H1 (cell line): ENCODE measurements at regions of chr12 and their contacts with region 1.

Region 1: GRCh38 chr12:9906873-9907272 is 25.3 kb downstream of the CLEC2A start:
- DNase-seq: no peak
- H3K4me3 ChIP-seq: peak overlapping the region in 1 of 4 experiments; percentile 71; a peak in 3 of 8 replicates
- H3K27ac ChIP-seq: no peak overlapping the region
- H3K4me1 ChIP-seq: peaks cover 0 to 9% (median 6%) of the 10 kb centered on the region in 4 experiments; a peak in 3 of 7 replicates
- H3K27me3 ChIP-seq: no peaks in the 10 kb centered on the region
- CTCF ChIP-seq: no peak
- EP300 ChIP-seq: no peak
- POLR2A ChIP-seq: peak in 1 of 2 experiments; percentile 37; a peak in 2 of 3 replicates
- RAD21 ChIP-seq: no peak

Region 2: GRCh38 chr12:9925708-9926393 is 19.0 kb after region 1 on chr12:
- CTCF ChIA-PET with region 1: interaction called, 4 read pairs
- POLR2A ChIA-PET with region 1: interaction called, 11 read pairs
- DNase-seq: peak in 1 of 2 experiments; percentile 33
- H3K4me3 ChIP-seq: no peak overlapping the region
- H3K27ac ChIP-seq: no peak overlapping the region
- H3K4me1 ChIP-seq: no peaks in the 10 kb centered on the region
- H3K27me3 ChIP-seq: no peaks in the 10 kb centered on the region
- CTCF ChIP-seq: peak in 2 of 3 experiments; percentile 47 to 51; a peak in 3 of 4 replicates
- EP300 ChIP-seq: no peak
- POLR2A ChIP-seq: no peak
- RAD21 ChIP-seq: peak; percentile 69 to 74